MCF 10A (cell line): ENCODE measurements at regions of chr9 and their contacts with region 1.

Region 1: GRCh38 chr9:112379177-112380101 is 469 bp upstream of the HSDL2 start:
- DNase-seq: peak; percentile 98
- H3K4me3 Mint-ChIP-seq: peak overlapping the region; percentile 93
- H3K27ac Mint-ChIP-seq: peak overlapping the region; percentile 83
- H3K4me1 Mint-ChIP-seq: peaks cover 34% of the 10 kb centered on the region
- H3K27me3 Mint-ChIP-seq: no peaks in the 10 kb centered on the region
- CTCF ChIP-seq: no peak

Region 2: GRCh38 chr9:112333639-112334431 is 45.6 kb before region 1 on chr9:
- CTCF ChIA-PET with region 1: interaction called, 3 read pairs
- POLR2A ChIA-PET with region 1: interaction called, 50 read pairs
- intact Hi-C with region 1: no loop called
- DNase-seq: peak; percentile 94
- H3K4me3 Mint-ChIP-seq: peak overlapping the region; percentile 94
- H3K27ac Mint-ChIP-seq: peak overlapping the region; percentile 94
- H3K4me1 Mint-ChIP-seq: peaks cover 13% of the 10 kb centered on the region
- H3K27me3 Mint-ChIP-seq: no peaks in the 10 kb centered on the region
- CTCF ChIP-seq: peak; percentile 35

Region 3: DNA sequence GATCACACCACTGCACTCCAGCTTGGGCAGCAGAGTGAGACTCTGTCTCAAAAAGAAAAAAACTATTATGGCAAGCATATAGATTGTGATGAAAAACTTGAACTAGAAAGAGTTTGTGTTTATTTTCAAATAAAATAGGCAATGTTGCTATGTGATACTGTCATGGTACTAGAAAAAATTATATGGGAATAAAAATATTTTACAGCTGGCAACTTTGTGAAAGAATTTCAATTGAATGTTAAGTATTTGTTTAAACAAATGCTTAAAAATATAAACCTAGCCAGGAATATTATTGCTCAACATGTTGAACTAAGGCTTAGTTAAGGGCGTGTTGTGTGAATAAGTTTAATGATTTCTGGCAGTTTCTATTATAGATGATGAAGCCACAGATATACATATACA is 32.2 kb after region 1 on chr9:
- CTCF ChIA-PET with region 1: no interaction called
- POLR2A ChIA-PET with region 1: interaction called, 11 read pairs
- intact Hi-C with region 1: no loop called
- DNase-seq: no peak
- H3K4me3 Mint-ChIP-seq: no peak overlapping the region
- H3K27ac Mint-ChIP-seq: no peak overlapping the region
- H3K4me1 Mint-ChIP-seq: no peaks in the 10 kb centered on the region
- H3K27me3 Mint-ChIP-seq: no peaks in the 10 kb centered on the region
- CTCF ChIP-seq: no peak

Region 4: DNA sequence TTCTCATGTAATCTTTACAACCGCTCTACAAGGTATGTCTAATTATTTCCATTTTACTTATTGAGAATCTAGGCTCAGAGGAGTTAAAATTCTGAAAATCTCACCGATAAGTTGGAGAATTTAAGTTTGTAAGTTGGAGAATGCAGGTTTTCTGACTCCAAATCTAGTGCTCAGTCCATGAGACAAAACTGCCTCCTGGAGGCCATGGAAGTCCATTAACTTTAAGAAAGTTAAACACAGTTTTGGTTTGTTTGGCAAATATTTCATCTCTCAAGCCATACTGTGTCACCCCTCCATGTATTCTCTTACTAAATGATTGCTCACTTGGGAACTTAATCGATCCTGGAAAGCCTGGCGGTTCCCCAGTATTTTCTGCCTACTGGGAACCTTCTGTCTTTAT is 285.9 kb after region 1 on chr9:
- CTCF ChIA-PET with region 1: no interaction called
- POLR2A ChIA-PET with region 1: interaction called, 7 read pairs
- intact Hi-C with region 1: loop called (anchors 10 kb)
- DNase-seq: peak; percentile 31
- H3K4me3 Mint-ChIP-seq: no peak overlapping the region
- H3K27ac Mint-ChIP-seq: no peak overlapping the region
- H3K4me1 Mint-ChIP-seq: no peaks in the 10 kb centered on the region
- H3K27me3 Mint-ChIP-seq: no peaks in the 10 kb centered on the region
- CTCF ChIP-seq: peak; percentile 36

Region 5: DNA sequence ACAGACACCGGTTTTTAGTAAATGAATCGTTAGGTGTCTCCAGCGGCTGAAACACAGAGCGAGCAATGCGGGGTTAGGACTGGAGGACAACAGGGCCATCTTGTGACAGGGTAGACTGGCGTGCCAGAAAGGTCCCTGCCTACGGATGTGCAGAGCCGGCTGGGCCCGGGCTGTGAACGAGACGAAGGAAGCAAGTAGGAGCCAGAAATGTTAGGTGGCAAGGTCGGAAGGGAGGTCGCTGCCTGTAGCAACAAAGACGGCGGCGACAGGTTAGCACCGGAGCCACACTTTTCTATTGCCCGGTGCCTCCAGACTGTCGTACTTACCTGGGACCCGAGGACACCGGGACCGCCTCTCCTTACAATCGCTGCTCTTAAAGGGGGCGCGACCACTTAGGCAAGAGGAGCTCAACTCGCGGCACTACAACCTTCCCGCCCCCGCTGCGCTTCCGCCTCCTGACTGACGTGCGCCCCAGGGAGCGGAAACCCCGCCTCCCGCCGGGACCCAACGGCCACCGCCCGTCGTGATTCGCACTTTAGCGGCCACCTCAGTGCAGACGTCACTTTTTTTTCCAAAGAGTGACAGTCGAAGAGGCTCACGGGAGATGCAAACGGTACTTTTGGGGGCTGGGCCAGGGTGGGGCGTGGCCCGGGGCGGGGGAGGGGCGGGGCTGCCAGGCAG is 338.4 kb after region 1 on chr9 and contains the start of gene INIP:
- CTCF ChIA-PET with region 1: interaction called, 6 read pairs
- POLR2A ChIA-PET with region 1: interaction called, 30 read pairs
- intact Hi-C with region 1: no loop called
- DNase-seq: peak; percentile 97
- H3K4me3 Mint-ChIP-seq: peak within 1 kb of the TSS; percentile 100
- H3K27ac Mint-ChIP-seq: peak within 1 kb of the TSS; percentile 98
- H3K4me1 Mint-ChIP-seq: peaks cover 8% of the 10 kb centered on the region
- H3K27me3 Mint-ChIP-seq: no peaks in the 10 kb centered on the region
- CTCF ChIP-seq: peak; percentile 6
- total RNA-seq, gene INIP: 28.0 and 33.5 TPM in 2 replicates

Region 6: GRCh38 chr9:112905084-112905483 is 525.6 kb after region 1 on chr9:
- CTCF ChIA-PET with region 1: no interaction called
- POLR2A ChIA-PET with region 1: no interaction called
- intact Hi-C with region 1: loop called (anchors 10 kb)
- DNase-seq: no peak
- H3K4me3 Mint-ChIP-seq: no peak overlapping the region
- H3K27ac Mint-ChIP-seq: no peak overlapping the region
- H3K4me1 Mint-ChIP-seq: peaks cover 5% of the 10 kb centered on the region
- H3K27me3 Mint-ChIP-seq: peaks cover 4% of the 10 kb centered on the region
- CTCF ChIP-seq: no peak